Activated B cell treated with CpG ODN at 0.5 μM for 24 hours (primary cell): ENCODE measurements at regions of chr6 and their contacts with region 1.

Region 1: GRCh38 chr6:26401987-26402658 is at the start of gene BTN3A1:
- DNase-seq: peak; percentile 43
- ATAC-seq: peak; percentile 87
- H3K4me3 Mint-ChIP-seq: peak within 1 kb of the TSS; percentile 98
- H3K27ac Mint-ChIP-seq: peak within 1 kb of the TSS; percentile 98
- H3K4me1 Mint-ChIP-seq: peaks cover 65% of the 10 kb centered on the region
- H3K27me3 Mint-ChIP-seq: no peaks in the 10 kb centered on the region
- CTCF ChIP-seq: no peak
- total RNA-seq, gene BTN3A1: 55.4 and 61.7 TPM in 2 replicates

Region 2: GRCh38 chr6:26383624-26384417 is 18.3 kb before region 1 on chr6:
- CTCF ChIA-PET with region 1: no interaction called
- POLR2A ChIA-PET with region 1: interaction called, 15 read pairs
- intact Hi-C with region 1: loop called (anchors 1 kb)
- DNase-seq: no peak
- ATAC-seq: peak; percentile 16
- H3K4me3 Mint-ChIP-seq: peak overlapping the region; percentile 97
- H3K27ac Mint-ChIP-seq: peak overlapping the region; percentile 94
- H3K4me1 Mint-ChIP-seq: peaks cover 66% of the 10 kb centered on the region
- H3K27me3 Mint-ChIP-seq: no peaks in the 10 kb centered on the region
- CTCF ChIP-seq: no peak

Region 3: GRCh38 chr6:26439657-26440056 is 37.5 kb after region 1 on chr6:
- CTCF ChIA-PET with region 1: no interaction called
- POLR2A ChIA-PET with region 1: no interaction called
- intact Hi-C with region 1: loop called (anchors 5 kb)
- DNase-seq: no peak
- ATAC-seq: no peak
- H3K4me3 Mint-ChIP-seq: peak overlapping the region; percentile 92
- H3K27ac Mint-ChIP-seq: peak overlapping the region; percentile 90
- H3K4me1 Mint-ChIP-seq: peaks cover 40% of the 10 kb centered on the region
- H3K27me3 Mint-ChIP-seq: no peaks in the 10 kb centered on the region
- CTCF ChIP-seq: no peak